CD14-positive monocyte (primary cell): ENCODE measurements at regions of chr14 and their contacts with region 1.

Region 1: GRCh38 chr14:20682435-20683124 is 1.8 kb upstream of the RNASE4 start:
- DNase-seq: peak; percentile 83 to 87 (median 85)
- H3K4me3 ChIP-seq: peak overlapping the region; percentile 84 to 91 (median 86)
- H3K4me3 Mint-ChIP-seq: no peak overlapping the region
- H3K27ac ChIP-seq: peak overlapping the region; percentile 96 to 99
- H3K27ac Mint-ChIP-seq: no peak overlapping the region
- H3K4me1 ChIP-seq: peaks cover 61% of the 10 kb centered on the region in 2 donors
- H3K4me1 Mint-ChIP-seq: peaks cover 50% of the 10 kb centered on the region
- H3K27me3 ChIP-seq: no peaks in the 10 kb centered on the region
- H3K27me3 Mint-ChIP-seq: peaks cover 0 to 9% (median 0%) of the 10 kb centered on the region in 3 donors
- CTCF ChIP-seq: no peak

Region 2: DNA sequence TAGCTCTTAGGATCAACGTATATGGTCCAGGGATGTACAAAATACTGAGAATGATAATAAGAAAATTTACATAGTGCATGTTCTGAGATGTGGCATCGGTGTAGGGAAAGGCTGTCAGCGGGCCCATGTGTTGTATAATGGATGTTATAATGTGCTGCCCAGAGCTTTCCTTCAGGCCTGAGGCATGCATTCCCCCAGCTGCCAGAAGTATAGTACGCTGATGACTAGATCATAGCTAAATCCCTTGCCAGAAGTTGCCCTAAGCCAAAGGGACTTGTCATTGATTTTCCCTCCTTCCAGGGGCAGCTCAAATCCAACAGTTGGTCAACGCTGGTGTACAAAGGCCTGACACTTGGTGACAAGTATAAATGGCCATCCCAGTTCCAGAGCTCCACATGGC is 498.4 kb before region 1 on chr14:
- intact Hi-C with region 1: no loop called
- DNase-seq: no peak
- H3K4me3 ChIP-seq: no peak overlapping the region
- H3K4me3 Mint-ChIP-seq: no peak overlapping the region
- H3K27ac ChIP-seq: no peak overlapping the region
- H3K27ac Mint-ChIP-seq: no peak overlapping the region
- H3K4me1 ChIP-seq: peaks cover 19 to 21% of the 10 kb centered on the region in 2 donors
- H3K4me1 Mint-ChIP-seq: peaks cover 18% of the 10 kb centered on the region
- H3K27me3 ChIP-seq: no peaks in the 10 kb centered on the region
- H3K27me3 Mint-ChIP-seq: peaks cover 0 to 6% (median 2%) of the 10 kb centered on the region in 3 donors
- CTCF ChIP-seq: no peak

Region 3: DNA sequence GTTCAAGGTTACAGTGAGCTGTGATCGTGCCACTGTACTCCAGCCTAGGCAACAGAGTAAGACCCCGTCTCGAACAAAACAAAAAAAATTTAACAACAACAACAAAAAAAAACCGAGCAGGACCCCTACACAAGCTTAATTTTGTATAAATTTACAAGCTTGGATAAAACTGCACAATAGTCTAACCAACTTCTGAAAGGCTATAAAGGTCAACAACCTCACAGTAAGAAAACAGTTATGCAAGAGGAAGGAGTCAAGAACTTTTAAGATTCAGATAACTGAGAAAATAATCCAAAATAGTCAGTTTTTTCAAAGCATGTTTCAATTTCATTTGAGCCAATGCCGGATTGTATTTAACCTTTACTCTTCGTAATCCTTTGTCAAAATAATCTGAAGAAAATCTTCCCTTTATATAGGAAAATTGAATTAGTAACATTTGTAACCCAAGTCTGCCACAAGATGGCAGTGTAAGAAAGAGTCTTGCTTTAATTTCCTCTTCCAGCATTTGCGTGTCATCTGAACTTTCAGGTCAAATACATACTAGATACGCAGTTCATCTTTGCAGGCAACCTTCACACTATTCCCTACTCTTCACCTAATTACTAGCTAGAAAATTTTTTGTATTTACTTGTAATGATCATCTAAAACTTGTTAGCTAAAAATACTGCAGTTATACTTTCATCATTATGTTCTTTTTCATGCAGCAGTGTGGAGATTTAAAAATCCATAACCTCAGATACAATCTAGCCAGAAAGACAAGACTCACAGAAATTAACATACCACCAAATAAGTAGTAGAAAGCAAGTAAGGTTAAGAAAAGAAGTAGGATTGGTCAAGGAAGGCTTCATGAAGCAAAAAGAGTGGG is 355.3 kb before region 1 on chr14:
- intact Hi-C with region 1: loop called in 1 of 2 experiments (anchors 5 kb)
- DNase-seq: peak; percentile 50 to 79 (median 61)
- H3K4me3 ChIP-seq: no peak overlapping the region
- H3K4me3 Mint-ChIP-seq: no peak overlapping the region
- H3K27ac ChIP-seq: no peak overlapping the region
- H3K27ac Mint-ChIP-seq: peak overlapping the region in 1 of 7 donors; percentile 13
- H3K4me1 ChIP-seq: peaks cover 0 to under 1% of the 10 kb centered on the region in 2 donors
- H3K4me1 Mint-ChIP-seq: peaks cover 15% of the 10 kb centered on the region
- H3K27me3 ChIP-seq: no peaks in the 10 kb centered on the region
- H3K27me3 Mint-ChIP-seq: no peaks in the 10 kb centered on the region
- CTCF ChIP-seq: peak; percentile 81

Region 4: DNA sequence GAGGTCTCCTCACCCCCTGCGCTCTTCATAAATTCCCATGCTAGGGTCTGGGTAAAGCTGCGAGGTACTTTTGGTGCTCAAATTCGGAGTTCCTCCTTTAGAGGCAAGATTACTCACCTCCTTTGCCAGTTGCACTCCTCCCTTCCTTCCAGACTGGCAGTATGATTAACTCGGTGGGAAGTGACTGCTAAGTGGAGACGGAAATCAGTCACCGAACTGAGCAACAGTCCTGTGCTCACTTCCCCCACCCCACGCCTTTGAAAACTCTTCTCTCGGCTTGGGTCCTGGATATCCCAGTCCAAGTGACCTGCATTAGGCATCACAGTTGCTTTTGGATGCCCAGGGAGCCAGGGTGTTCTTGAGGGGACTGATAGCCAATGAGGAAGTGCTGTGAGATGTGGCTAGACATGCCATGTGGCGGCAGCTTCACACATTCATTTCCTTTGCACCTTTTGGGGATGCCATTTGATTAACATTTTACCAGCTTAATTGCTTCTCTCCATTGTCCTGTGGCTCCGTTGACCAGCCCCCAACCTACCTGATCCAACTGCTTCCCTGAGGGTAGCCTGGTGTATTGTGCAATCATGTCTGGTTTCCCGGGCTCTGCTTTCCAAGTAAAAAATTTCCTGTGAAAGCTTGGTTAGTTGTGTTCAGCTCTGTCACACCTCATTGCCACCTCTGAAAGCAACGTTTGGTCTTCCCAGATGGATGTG is 212.5 kb before region 1 on chr14:
- intact Hi-C with region 1: loop called in 1 of 2 experiments (anchors 10 kb)
- DNase-seq: peak; percentile 95 to 98 (median 98)
- H3K4me3 ChIP-seq: peak overlapping the region; percentile 75 to 93 (median 87)
- H3K4me3 Mint-ChIP-seq: peak overlapping the region; percentile 98 to 100
- H3K27ac ChIP-seq: peak overlapping the region; percentile 97 to 100
- H3K27ac Mint-ChIP-seq: peak overlapping the region; percentile 97 to 100 (median 99)
- H3K4me1 ChIP-seq: peaks cover 26 to 35% of the 10 kb centered on the region in 2 donors
- H3K4me1 Mint-ChIP-seq: peaks cover 34% of the 10 kb centered on the region
- H3K27me3 ChIP-seq: no peaks in the 10 kb centered on the region
- H3K27me3 Mint-ChIP-seq: peaks cover 0 to 3% (median 0%) of the 10 kb centered on the region in 3 donors
- CTCF ChIP-seq: no peak

Region 5: GRCh38 chr14:20624495-20625070 is 58.0 kb before region 1 on chr14:
- intact Hi-C with region 1: loop called in 1 of 2 experiments (anchors 5 kb)
- DNase-seq: peak; percentile 84 to 89 (median 88)
- H3K4me3 ChIP-seq: peak overlapping the region; percentile 13 to 65 (median 26)
- H3K4me3 Mint-ChIP-seq: peak overlapping the region; percentile 77 to 93
- H3K27ac ChIP-seq: peak overlapping the region in 1 of 2 donors; percentile 34
- H3K27ac Mint-ChIP-seq: peak overlapping the region in 5 of 7 donors; percentile 26 to 89 (median 73)
- H3K4me1 ChIP-seq: peaks cover 43 to 44% of the 10 kb centered on the region in 2 donors
- H3K4me1 Mint-ChIP-seq: peaks cover 49% of the 10 kb centered on the region
- H3K27me3 ChIP-seq: peaks cover 44 to 48% of the 10 kb centered on the region in 2 donors
- H3K27me3 Mint-ChIP-seq: peaks cover 47 to 53% (median 51%) of the 10 kb centered on the region in 3 donors
- CTCF ChIP-seq: no peak

Region 6: DNA sequence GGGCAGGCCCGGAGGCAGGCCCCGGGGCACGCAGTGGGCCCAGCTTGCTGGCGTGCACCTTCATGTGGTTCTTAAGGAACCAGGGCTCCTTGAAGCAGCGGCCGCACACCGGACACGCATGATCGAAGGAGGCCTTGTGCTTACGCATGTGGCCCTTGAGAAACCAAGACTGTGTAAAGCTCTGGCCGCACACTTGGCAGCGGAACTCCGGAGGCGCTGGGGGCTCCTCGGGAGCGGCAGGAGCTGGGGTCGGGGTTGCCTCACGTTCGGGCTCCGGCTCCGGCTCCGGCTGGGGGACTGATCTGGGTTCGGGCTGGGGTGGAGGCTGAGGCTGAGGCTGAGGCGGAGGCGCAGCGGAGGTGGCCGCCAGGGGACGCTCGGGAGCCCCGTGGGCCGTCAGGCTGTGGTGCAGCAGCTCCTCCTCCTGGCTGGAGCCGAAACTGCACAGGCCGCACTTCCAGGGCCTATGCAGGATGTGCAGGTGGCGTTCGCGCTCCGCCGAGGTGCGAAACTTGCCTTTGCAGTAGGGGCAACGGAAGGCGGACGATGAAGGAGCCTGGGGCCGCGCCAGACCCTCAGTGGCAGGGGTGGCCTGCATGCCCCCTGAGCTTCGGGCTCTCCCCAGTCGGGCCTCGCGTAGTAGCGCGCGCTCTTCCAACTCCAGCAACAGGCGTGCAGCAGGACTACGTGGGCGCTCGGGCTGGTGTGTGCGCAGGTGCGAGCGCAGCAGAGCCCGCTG is 409.9 kb after region 1 on chr14:
- intact Hi-C with region 1: loop called in 1 of 2 experiments (anchors 10 kb)
- DNase-seq: peak; percentile 75 to 85 (median 81)
- H3K4me3 ChIP-seq: no peak overlapping the region
- H3K4me3 Mint-ChIP-seq: no peak overlapping the region
- H3K27ac ChIP-seq: no peak overlapping the region
- H3K27ac Mint-ChIP-seq: peak overlapping the region in 2 of 7 donors; percentile 15 to 84
- H3K4me1 ChIP-seq: peaks cover 9 to 20% of the 10 kb centered on the region in 2 donors
- H3K4me1 Mint-ChIP-seq: peaks cover 21% of the 10 kb centered on the region
- H3K27me3 ChIP-seq: no peaks in the 10 kb centered on the region
- H3K27me3 Mint-ChIP-seq: peaks cover 3 to 5% (median 3%) of the 10 kb centered on the region in 3 donors
- CTCF ChIP-seq: peak; percentile 100